ENCODE measurements at regions of chr15 and their contacts with region 1.

Region 1: DNA sequence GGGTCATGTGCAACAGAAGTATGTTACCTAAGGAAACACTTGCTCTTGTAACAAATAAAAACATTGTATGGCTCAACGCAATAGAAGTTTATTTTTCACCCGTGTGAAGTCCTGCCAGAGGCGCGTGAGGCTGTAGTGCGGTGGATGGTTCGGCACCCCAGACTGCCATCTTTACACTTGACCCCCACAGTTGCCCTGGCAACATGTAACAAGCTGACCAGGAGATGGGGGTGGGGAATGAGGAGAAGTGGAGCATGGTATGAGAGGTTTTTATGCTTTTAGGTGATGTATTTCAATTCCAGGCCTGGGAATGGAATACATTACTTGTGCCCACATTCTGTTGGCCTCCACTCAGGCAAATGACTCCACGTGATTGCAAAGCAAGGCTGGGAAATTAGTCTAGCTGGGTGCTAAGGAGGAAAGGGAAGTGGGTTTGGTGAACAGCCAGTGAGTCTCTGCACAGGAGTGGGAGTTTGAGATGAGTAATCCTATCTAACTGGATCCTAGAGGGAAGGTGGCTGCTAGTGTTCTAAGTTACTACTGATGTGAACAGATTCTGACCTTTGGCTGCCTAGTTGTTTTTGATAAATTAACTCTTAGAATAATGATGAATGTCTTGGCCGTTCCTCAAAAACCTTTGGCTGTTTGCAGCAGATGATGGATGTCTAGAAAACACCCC is 33.8 kb upstream of the GREM1 start:
- DNase-seq: no peak
- H3K4me3 ChIP-seq: no peak overlapping the region
- CTCF ChIP-seq: no peak

Region 2: GRCh38 chr15:32717426-32718226 is 33.6 kb after region 1 on chr15 and contains the start of gene GREM1:
- CTCF ChIA-PET with region 1: interaction called, 3 read pairs
- POLR2A ChIA-PET with region 1: interaction called, 24 read pairs
- DNase-seq: no peak
- H3K4me3 ChIP-seq: peak within 1 kb of the TSS; percentile 93
- CTCF ChIP-seq: no peak

Measured in AG04449 (cell line).